Posterior vena cava (tissue), 2 donors: ENCODE measurements at regions of chr2 and their contacts with region 1.

Region 1: GRCh38 chr2:57862153-57862552 is 184.5 kb upstream of the VRK2 start:
- DNase-seq: no peak

Region 2: GRCh38 chr2:57842531-57842930 is 19.6 kb before region 1 on chr2:
- intact Hi-C with region 1: loop called in 1 of 2 experiments (anchors 2 kb)
- DNase-seq: no peak